BJ (cell line): ENCODE measurements at regions of chr6 and their contacts with region 1.

Region 1: DNA sequence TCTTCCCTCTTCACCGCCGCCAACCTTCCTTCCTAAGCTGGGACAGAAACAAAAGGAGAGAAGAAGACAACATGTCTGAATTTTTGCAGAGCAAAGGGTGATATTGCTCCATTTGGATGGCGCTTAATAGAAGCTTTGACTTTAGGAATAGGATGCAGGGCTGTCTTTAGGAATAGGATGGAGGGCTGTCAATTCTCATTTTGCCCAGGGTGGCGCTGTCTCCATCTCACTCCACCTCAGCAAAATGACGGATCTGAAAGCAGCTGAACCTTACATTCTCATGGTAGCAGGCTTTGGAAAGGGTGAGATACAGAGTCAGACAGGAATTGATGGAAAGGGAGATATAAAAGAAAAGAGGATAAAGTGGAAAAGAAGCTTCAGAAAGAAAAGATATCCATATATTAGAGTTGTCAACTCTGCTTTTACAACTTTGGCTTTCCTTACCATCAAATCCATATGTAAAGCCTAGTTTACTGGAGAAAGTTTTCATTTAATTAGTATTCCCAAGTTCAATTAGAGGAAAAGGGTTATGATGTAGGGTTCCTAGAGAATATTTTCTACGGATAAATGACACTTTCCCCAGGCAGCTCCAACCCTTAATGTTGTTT is 2.4 kb downstream of the MTCL3 start:
- DNase-seq: no peak
- H3K4me3 ChIP-seq: peak overlapping the region; percentile 72
- H3K27me3 ChIP-seq: 0 out of 2 replicates have a peak, but pooled peaks cover 3% of the 10 kb centered on the region
- CTCF ChIP-seq: peak; percentile 66

Region 2: GRCh38 chr6:127249621-127250020 is 267.1 kb before region 1 on chr6:
- CTCF ChIA-PET with region 1: no interaction called
- POLR2A ChIA-PET with region 1: no interaction called
- DNase-seq: no peak
- H3K4me3 ChIP-seq: no peak overlapping the region
- H3K27me3 ChIP-seq: no peaks in the 10 kb centered on the region
- CTCF ChIP-seq: no peak

Region 3: GRCh38 chr6:127464881-127465459 is 51.8 kb before region 1 on chr6:
- CTCF ChIA-PET with region 1: interaction called, 14 read pairs
- POLR2A ChIA-PET with region 1: no interaction called
- DNase-seq: no peak
- H3K4me3 ChIP-seq: no peak overlapping the region
- H3K27me3 ChIP-seq: no peaks in the 10 kb centered on the region
- CTCF ChIP-seq: peak; percentile 91

Region 4: DNA sequence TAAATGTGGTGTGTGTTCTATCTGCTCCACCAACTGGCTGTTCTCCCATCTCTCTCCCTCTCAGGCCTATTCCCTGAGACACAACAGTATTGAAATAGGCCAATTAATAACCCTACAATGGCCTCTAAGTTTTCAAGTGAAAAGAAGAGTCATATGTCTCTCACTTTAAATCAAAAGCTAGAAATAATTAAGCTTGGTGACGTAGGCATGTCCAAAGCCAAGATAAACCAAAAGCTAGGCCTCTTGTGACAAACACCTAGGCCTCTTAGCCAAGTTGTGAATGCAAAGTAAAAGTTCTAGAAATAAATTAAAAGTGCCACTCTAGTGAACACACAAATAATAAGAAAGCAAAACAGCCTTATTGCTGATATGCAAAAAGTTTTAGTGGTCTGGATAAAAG is 27.5 kb before region 1 on chr6:
- CTCF ChIA-PET with region 1: interaction called, 11 read pairs
- POLR2A ChIA-PET with region 1: no interaction called
- DNase-seq: no peak
- H3K4me3 ChIP-seq: no peak overlapping the region
- H3K27me3 ChIP-seq: no peaks in the 10 kb centered on the region
- CTCF ChIP-seq: no peak